ENCODE measurements at regions of chr19 and their contacts with region 1.

Region 1: GRCh38 chr19:46404055-46404752 is 9.2 kb downstream of the CCDC8 start:
- DNase-seq: peak; percentile 83 to 85
- ATAC-seq: peak; percentile 72
- H3K4me3 ChIP-seq: peak overlapping the region; percentile 21 to 39
- H3K27ac ChIP-seq: peak overlapping the region; percentile 7 to 86
- H3K4me1 ChIP-seq: no peaks in the 10 kb centered on the region
- H3K27me3 ChIP-seq: no peaks in the 10 kb centered on the region

Region 2: DNA sequence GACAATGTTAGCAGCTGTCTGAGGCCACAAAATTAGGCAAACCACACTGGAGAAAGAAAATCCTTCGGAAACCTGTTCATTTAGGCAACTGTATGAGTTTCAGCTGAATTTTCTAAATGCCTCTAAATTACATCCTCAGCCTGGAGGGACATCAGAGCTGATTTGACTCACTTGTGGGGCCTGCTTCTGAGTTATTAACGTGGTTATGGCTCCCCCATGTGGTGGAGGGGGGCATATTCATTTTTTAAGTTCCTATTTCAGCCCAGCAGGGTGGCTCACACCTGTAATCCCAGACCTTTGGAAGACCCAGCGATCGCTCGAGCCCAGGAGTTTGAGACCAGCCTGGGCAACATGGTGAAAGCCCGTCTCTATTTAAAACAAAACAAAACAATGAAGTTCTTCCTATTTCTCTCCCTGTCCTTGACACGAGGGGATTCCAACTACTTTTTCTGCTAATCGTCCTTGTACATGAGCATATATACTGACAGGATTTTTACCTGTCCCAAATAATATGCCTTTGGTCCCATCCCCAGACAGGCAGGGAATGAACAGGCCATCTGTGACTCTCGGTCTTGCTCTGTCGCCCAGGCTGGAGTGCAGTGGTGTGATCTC is 138.9 kb before region 1 on chr19:
- intact Hi-C with region 1: no loop called
- DNase-seq: no peak
- ATAC-seq: no peak
- H3K4me3 ChIP-seq: no peak overlapping the region
- H3K27ac ChIP-seq: no peak overlapping the region
- H3K4me1 ChIP-seq: no peaks in the 10 kb centered on the region
- H3K27me3 ChIP-seq: no peaks in the 10 kb centered on the region

Region 3: GRCh38 chr19:46283771-46284170 is 120.4 kb before region 1 on chr19:
- intact Hi-C with region 1: loop called in 1 of 2 experiments (anchors 5 kb)
- DNase-seq: no peak
- ATAC-seq: peak; percentile 15
- H3K4me3 ChIP-seq: no peak overlapping the region
- H3K27ac ChIP-seq: no peak overlapping the region
- H3K4me1 ChIP-seq: no peaks in the 10 kb centered on the region
- H3K27me3 ChIP-seq: no peaks in the 10 kb centered on the region

Region 4: DNA sequence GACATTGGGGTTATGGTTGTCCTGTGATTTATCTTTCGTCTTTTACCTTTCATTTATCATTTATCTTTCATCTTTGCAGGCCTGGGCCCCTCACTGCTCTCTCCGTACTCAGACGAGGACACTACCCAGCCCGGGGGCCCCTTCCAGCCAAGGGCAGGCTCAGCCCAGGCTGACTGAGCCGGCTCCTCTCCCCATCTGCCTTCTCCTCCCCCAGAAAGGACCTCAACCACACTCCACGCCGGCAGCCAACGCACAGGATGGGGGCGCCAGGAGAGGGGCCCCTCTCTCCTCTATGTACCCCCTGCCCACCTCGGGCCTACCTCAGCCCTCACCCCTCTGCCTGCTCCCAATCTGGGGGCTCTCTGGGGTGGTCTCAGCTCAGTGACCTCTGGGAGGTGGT is 64.8 kb before region 1 on chr19:
- intact Hi-C with region 1: no loop called
- DNase-seq: no peak
- ATAC-seq: no peak
- H3K4me3 ChIP-seq: no peak overlapping the region
- H3K27ac ChIP-seq: no peak overlapping the region
- H3K4me1 ChIP-seq: no peaks in the 10 kb centered on the region
- H3K27me3 ChIP-seq: no peaks in the 10 kb centered on the region

Region 5: DNA sequence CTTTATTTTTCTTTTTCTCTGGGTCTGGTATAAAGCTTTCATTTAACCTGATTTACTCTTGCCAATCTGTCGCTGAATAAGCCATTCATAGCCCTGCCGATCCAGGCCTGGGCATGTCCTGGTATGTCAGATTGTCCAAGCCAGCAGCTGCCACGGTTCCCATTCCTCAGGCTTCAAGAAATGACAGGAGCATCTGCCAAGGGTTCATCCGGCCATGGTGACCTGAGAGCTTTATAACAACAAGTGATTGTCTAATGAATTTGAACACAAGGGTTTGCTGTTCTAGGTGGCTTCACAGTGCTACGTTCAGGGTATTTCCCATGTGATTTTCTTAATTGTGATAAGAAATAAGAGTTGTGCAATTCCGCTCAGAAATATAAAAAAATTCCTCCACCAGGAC is 47.1 kb after region 1 on chr19:
- intact Hi-C with region 1: no loop called
- DNase-seq: peak in 1 of 2 donors; percentile 70
- ATAC-seq: peak; percentile 49
- H3K4me3 ChIP-seq: no peak overlapping the region
- H3K27ac ChIP-seq: peak overlapping the region; percentile 14 to 83
- H3K4me1 ChIP-seq: peaks cover 3 to 4% of the 10 kb centered on the region in 2 donors
- H3K27me3 ChIP-seq: no peaks in the 10 kb centered on the region

Region 6: DNA sequence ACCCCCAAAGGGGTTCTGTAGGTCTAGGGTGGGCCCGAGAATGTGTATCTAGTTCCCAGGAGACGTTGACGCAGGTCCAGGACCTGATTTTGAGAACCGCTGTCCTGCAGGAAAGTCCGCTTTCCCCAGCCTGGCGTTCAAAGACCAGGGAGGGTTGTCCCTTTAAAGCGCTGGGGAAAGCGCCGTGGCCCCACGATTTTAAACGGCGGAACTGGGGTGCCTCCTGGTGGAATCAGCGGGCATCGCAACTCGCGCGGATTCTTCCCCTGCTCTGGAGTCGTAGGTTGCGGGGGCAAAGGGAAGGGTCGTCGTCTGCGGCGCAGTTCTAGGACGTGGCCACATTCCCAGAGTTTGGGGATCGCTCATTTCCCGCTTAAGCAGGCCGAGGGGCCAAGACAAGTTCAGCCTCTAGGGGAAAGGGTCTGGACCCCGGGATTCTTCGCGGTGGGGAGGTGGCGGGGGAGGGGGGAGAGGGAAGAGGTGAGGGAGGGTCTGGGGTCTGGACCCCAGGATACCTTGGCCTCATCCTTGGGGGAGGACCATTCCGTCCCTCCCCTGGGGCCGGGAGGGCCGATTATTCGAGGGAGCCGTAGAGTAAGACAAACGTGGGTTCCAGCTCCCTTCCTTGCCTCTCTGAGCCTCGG is 83.7 kb after region 1 on chr19:
- intact Hi-C with region 1: loop called (anchors 1 to 2 kb)
- DNase-seq: peak; percentile 83 to 95
- ATAC-seq: peak; percentile 88
- H3K4me3 ChIP-seq: peak overlapping the region; percentile 2 to 20
- H3K27ac ChIP-seq: no peak overlapping the region
- H3K4me1 ChIP-seq: no peaks in the 10 kb centered on the region
- H3K27me3 ChIP-seq: no peaks in the 10 kb centered on the region

Measured in aorta (tissue), 5 donors.